Posterior vena cava (tissue), 2 donors: ENCODE measurements at regions of chr12 and their contacts with region 1.

Region 1: DNA sequence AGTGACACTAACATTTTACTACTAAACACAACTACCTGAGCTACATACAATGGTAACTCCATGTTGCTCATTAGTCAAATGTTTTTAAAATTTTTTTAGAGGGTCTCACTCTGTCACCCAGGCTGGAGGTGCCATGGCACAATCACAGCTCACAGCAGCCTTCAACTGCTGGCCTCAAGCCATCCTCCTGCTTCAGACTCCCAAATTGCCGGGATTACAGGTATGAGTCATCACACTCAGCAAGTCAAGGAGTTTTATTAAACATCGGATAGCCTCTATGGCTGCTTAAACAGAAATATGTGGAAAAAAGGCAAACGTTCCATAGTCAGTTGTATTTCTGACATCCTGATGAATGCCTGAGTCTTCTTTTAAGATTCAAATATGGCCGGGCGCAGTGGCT is 11.1 kb upstream of the NPFF start:
- DNase-seq: no peak

Region 2: GRCh38 chr12:53365245-53365904 is 153.0 kb before region 1 on chr12:
- intact Hi-C with region 1: loop called in 1 of 2 experiments (anchors 10 kb)
- DNase-seq: peak; percentile 14

Region 3: GRCh38 chr12:53492830-53493611 is 25.4 kb before region 1 on chr12:
- intact Hi-C with region 1: no loop called
- DNase-seq: peak; percentile 99

Region 4: GRCh38 chr12:54068418-54069070 is 550.2 kb after region 1 on chr12:
- intact Hi-C with region 1: no loop called
- DNase-seq: no peak